ENCODE measurements at regions of chr7 and their contacts with region 1.

Region 1: DNA sequence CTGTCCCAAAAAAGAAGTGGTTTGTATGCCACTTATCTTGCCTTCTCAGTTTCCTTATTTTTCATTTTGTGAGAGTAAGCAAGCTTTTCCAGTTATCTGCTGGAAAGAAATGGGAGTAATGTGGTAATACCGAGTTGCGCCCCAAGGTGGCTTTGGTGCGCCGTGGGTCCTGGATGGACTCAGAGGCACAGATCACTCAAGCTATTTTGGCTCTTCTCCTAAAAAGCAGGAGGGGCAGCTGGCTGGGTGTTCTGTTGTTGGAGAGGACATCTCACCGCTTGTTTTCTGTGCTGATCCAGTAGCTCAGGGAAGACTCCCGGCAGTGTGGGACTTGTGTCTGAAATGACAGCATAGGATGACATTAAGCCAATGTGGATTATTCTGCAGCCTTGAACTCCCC is 16.4 kb downstream of the PRKRIP1 start:
- DNase-seq: no peak
- CTCF ChIP-seq: peak; percentile 31

Region 2: GRCh38 chr7:102464577-102465280 is 52.2 kb after region 1 on chr7 and contains the starts of genes ALKBH4 and LRWD1:
- in situ Hi-C with region 1: loop called (anchors 5 kb)
- DNase-seq: peak; percentile 100
- CTCF ChIP-seq: no peak

Measured in GM13976 (cell line).